H1 (cell line): ENCODE measurements at regions of chr12 and their contacts with region 1.

Region 1: GRCh38 chr12:13085968-13086686 is 17.3 kb downstream of the GSG1 start:
- DNase-seq: no peak
- H3K4me3 ChIP-seq: no peak overlapping the region
- H3K27ac ChIP-seq: no peak overlapping the region
- H3K4me1 ChIP-seq: peaks cover 20 to 26% (median 24%) of the 10 kb centered on the region in 4 experiments
- H3K27me3 ChIP-seq: no peaks in the 10 kb centered on the region
- CTCF ChIP-seq: no peak
- EP300 ChIP-seq: no peak
- POLR2A ChIP-seq: no peak
- RAD21 ChIP-seq: no peak

Region 2: GRCh38 chr12:12946686-12947355 is 139.3 kb before region 1 on chr12:
- CTCF ChIA-PET with region 1: no interaction called
- POLR2A ChIA-PET with region 1: no interaction called
- DNase-seq: peak in 1 of 2 experiments; percentile 17
- H3K4me3 ChIP-seq: no peak overlapping the region
- H3K27ac ChIP-seq: no peak overlapping the region
- H3K4me1 ChIP-seq: no peaks in the 10 kb centered on the region
- H3K27me3 ChIP-seq: no peaks in the 10 kb centered on the region
- CTCF ChIP-seq: no peak
- EP300 ChIP-seq: no peak
- POLR2A ChIP-seq: no peak
- RAD21 ChIP-seq: no peak

Region 3: DNA sequence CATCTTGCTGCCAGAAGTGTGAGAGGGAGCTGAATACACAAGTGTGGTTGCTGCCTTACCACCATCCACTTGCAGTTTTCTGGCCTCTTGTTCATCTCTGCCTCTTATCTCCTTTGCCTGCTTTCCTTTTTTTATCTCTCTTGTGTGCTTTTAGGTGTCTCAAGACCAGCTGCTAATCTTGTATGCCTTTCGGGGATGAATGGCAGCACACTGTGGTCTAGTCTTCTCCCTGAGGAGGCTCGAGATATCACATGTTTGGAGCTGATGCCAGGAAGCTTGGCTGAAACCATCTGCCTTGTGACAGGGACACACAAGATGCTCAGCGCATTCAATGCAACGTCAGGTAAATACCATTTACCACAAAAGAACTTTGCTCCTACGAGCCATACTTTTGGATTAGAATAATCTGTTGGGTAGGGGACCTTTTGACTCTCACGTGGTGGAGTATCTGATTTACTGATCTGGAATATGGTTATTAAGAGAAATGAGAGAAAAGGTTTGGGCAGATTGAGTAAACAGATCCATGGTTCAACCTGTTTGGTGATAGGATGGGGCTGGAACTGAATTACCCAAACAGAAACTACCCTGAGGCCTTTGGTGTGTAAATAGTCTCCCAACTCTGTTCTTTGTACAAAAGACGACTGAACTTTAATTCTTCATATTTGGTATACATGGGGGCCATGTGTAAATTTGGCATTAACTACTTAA is 24.6 kb before region 1 on chr12:
- CTCF ChIA-PET with region 1: interaction called, 4 read pairs
- POLR2A ChIA-PET with region 1: interaction called, 16 read pairs
- DNase-seq: no peak
- H3K4me3 ChIP-seq: no peak overlapping the region
- H3K27ac ChIP-seq: no peak overlapping the region
- H3K4me1 ChIP-seq: no peaks in the 10 kb centered on the region; a peak in 1 of 7 replicates
- H3K27me3 ChIP-seq: no peaks in the 10 kb centered on the region
- CTCF ChIP-seq: no peak
- EP300 ChIP-seq: no peak
- POLR2A ChIP-seq: no peak
- RAD21 ChIP-seq: no peak

Region 4: GRCh38 chr12:13121568-13121967 is 35.4 kb after region 1 on chr12:
- CTCF ChIA-PET with region 1: no interaction called
- POLR2A ChIA-PET with region 1: no interaction called
- DNase-seq: no peak
- H3K4me3 ChIP-seq: no peak overlapping the region
- H3K27ac ChIP-seq: no peak overlapping the region
- H3K4me1 ChIP-seq: peaks cover 0 to 14% (median 5%) of the 10 kb centered on the region in 4 experiments; a peak in 4 of 7 replicates
- H3K27me3 ChIP-seq: no peaks in the 10 kb centered on the region; a peak in 1 of 7 replicates
- CTCF ChIP-seq: no peak
- EP300 ChIP-seq: no peak
- POLR2A ChIP-seq: no peak
- RAD21 ChIP-seq: no peak

Region 5: DNA sequence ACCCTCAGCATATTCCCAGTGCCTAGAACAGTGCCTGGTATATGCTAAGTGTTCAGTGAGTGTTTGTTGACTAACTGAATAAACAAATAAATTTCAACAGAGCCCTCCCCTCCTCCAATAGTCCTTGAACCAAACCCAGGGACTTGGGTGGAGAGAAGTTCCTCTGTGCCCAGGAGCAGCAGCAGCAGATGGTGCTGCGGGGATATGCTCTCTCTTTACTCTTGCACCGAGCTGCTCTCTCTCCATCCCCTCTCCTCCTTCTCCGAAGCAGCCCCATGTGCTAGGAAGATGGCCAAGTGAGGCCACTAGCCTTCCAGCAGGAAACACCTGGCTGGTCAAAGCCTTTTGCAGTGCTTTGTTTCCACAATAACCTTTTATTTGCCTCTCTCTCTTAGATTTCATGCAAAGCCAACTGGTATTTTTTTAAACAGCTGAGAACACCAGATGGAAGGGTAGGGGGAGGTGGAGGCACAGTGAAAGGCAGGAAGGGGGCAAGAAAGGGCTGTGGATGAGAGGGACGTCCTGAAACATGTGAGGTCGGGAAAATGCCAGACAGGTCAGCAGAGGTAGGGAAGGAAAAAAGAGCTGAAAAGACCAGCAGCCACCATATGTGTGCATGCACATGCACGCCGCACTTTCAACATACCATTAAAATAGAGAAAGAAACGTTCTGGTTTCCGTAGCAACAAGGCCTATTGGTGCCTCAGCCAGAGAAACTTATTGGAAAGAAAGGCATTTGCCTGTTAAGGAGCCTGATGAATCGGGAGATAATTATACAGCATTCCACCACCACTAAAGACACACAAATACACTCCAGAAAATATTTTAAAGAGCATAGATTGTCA is 189.3 kb after region 1 on chr12:
- CTCF ChIA-PET with region 1: no interaction called
- POLR2A ChIA-PET with region 1: no interaction called
- DNase-seq: no peak
- H3K4me3 ChIP-seq: no peak overlapping the region
- H3K27ac ChIP-seq: no peak overlapping the region
- H3K4me1 ChIP-seq: peaks cover 0 to 12% (median 3%) of the 10 kb centered on the region in 4 experiments; a peak in 3 of 7 replicates
- H3K27me3 ChIP-seq: peaks cover 0 to 8% (median 4%) of the 10 kb centered on the region in 4 experiments; a peak in 5 of 7 replicates
- CTCF ChIP-seq: no peak
- EP300 ChIP-seq: no peak
- POLR2A ChIP-seq: no peak
- RAD21 ChIP-seq: no peak